ENCODE measurements at regions of chr7 and their contacts with region 1.

Region 1: DNA sequence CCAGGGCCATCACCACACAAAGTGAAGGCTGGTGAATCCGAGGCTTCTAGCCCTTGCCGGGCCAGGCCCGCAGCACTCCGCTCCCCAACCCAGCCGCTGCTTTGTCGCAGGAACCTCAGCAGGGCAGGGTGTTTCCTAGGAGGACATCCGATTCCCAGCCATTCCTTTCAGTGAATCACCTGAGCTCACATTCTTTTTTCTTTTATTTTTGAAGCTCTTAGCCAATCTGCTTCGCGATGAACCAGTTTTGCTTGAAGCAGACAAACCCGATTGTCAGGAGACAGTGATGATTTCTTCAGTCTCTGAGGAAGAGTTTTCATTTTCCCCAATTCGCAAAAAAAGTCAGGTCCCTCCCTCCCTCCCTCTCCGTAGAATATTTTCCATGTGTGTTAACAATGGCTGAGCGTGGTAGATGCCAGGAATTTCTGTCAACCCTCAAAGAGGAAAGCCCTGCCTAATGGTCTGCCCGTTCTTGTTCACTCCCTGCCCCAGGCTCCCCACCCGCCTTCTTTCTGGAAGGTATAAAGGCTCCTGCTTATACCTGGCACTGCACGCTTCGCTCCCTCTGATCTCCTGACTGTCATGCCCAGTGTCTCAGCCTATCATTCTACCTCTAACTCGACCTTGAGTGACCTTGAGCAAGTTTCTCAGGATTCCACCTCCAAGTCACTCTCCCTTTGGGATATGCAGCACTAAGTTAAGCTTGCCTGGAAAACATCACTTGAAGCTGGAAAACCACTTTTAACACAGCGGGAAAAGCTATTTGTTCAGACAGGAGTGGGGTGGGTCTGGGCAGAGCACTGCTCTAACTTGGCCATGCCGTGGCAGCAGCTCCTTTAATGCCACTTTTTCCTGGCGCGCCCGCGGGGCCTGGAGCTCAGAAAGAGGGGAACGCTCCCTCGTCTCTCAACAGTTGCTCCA is 35.1 kb downstream of the EGFR start:
- DNase-seq: no peak
- ATAC-seq: no peak
- H3K4me3 ChIP-seq: no peak overlapping the region
- H3K27ac ChIP-seq: no peak overlapping the region
- H3K4me1 ChIP-seq: no peaks in the 10 kb centered on the region
- H3K27me3 ChIP-seq: no peaks in the 10 kb centered on the region; a peak in 1 of 4 replicates
- CTCF ChIP-seq: no peak
- EP300 ChIP-seq: no peak
- POLR2A ChIP-seq: no peak
- RAD21 ChIP-seq: no peak

Region 2: GRCh38 chr7:55073945-55074499 is 20.1 kb after region 1 on chr7:
- CTCF ChIA-PET with region 1: no interaction called
- POLR2A ChIA-PET with region 1: no interaction called
- RAD21 ChIA-PET with region 1: interaction called, 22 read pairs
- SMC1A ChIA-PET with region 1: interaction called, 6 read pairs
- in situ Hi-C with region 1: no loop called
- intact Hi-C with region 1: no loop called
- DNase-seq: peak; percentile 91
- ATAC-seq: peak; percentile 94
- H3K4me3 ChIP-seq: no peak overlapping the region
- H3K27ac ChIP-seq: peak overlapping the region; percentile 77
- H3K4me1 ChIP-seq: peaks cover 24% of the 10 kb centered on the region
- H3K27me3 ChIP-seq: no peaks in the 10 kb centered on the region
- CTCF ChIP-seq: no peak
- EP300 ChIP-seq: peak in 1 of 2 experiments; percentile 54; a peak in 1 of 4 replicates
- POLR2A ChIP-seq: peak; percentile 64
- RAD21 ChIP-seq: no peak

Measured in GM12878 (cell line).